K562 (cell line): ENCODE measurements at regions of chr1 and their contacts with region 1.

Region 1: GRCh38 chr1:109391626-109392025 is 6.1 kb downstream of the SORT1 start:
- DNase-seq: no peak
- ATAC-seq: no peak
- H3K4me3 ChIP-seq: peak overlapping the region; percentile 35
- H3K27ac ChIP-seq: peak overlapping the region; percentile 92
- H3K4me1 ChIP-seq: peaks cover 36 to 79% of the 10 kb centered on the region in 2 experiments
- H3K27me3 ChIP-seq: no peaks in the 10 kb centered on the region
- CTCF ChIP-seq: no peak
- EP300 ChIP-seq: no peak
- POLR2A ChIP-seq: no peak
- RAD21 ChIP-seq: no peak

Region 2: GRCh38 chr1:109370712-109371455 is 20.7 kb before region 1 on chr1:
- CTCF ChIA-PET with region 1: no interaction called
- POLR2A ChIA-PET with region 1: interaction called, 10 read pairs
- in situ Hi-C with region 1: no loop called
- intact Hi-C with region 1: no loop called
- DNase-seq: peak in 1 of 4 experiments; percentile 44
- ATAC-seq: peak; percentile 17
- H3K4me3 ChIP-seq: no peak overlapping the region
- H3K27ac ChIP-seq: peak overlapping the region; percentile 21; the same call in 2 of the 3 replicates
- H3K4me1 ChIP-seq: peaks cover 16 to 37% of the 10 kb centered on the region in 2 experiments
- H3K27me3 ChIP-seq: no peaks in the 10 kb centered on the region
- CTCF ChIP-seq: no peak
- EP300 ChIP-seq: no peak
- POLR2A ChIP-seq: no peak
- RAD21 ChIP-seq: no peak

Region 3: DNA sequence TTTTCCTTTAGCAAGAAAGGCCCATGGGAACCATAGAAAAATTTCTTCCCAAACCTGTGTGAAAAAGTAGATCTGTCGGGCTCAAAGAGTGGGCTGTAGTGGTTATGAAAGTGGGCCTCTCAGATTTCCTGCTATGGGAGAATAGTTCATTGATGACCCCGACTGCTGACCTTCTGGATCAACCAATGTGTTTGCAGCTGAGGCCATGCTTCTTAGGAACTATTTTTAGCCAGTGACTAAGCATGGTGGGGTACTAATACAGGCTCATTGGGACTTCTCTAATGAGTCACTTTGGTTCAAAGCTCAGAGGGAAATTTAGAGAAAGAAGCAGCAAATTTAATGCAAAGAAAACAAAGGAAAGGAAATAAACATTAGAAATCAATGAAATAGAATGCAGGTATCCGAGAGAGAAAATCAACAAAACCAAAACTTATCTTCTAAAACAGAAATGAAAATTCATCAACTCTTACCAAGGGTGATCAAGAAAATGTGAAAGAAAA is 47.2 kb after region 1 on chr1:
- CTCF ChIA-PET with region 1: no interaction called
- POLR2A ChIA-PET with region 1: no interaction called
- in situ Hi-C with region 1: no loop called
- intact Hi-C with region 1: no loop called
- DNase-seq: peak; percentile 32 to 78 (median 56)
- ATAC-seq: peak; percentile 87
- H3K4me3 ChIP-seq: no peak overlapping the region
- H3K27ac ChIP-seq: peak overlapping the region; percentile 4; the same call in 1 of the 3 replicates
- H3K4me1 ChIP-seq: peaks cover 0 to 15% of the 10 kb centered on the region in 2 experiments; a peak in 3 of 5 replicates
- H3K27me3 ChIP-seq: no peaks in the 10 kb centered on the region; a peak in 1 of 5 replicates
- CTCF ChIP-seq: no peak; a peak in 1 of 6 replicates
- EP300 ChIP-seq: no peak
- POLR2A ChIP-seq: no peak
- RAD21 ChIP-seq: no peak